ENCODE measurements at regions of chr20 and their contacts with region 1.

Region 1: GRCh38 chr20:56554869-56555268 is 21.8 kb downstream of the FAM209B start:
- DNase-seq: peak; percentile 88
- H3K4me3 ChIP-seq: no peak overlapping the region
- CTCF ChIP-seq: no peak

Region 2: GRCh38 chr20:56566271-56566981 is 11.6 kb after region 1 on chr20:
- CTCF ChIA-PET with region 1: interaction called, 32 read pairs
- POLR2A ChIA-PET with region 1: no interaction called
- DNase-seq: no peak
- H3K4me3 ChIP-seq: no peak overlapping the region
- CTCF ChIP-seq: no peak

Region 3: DNA sequence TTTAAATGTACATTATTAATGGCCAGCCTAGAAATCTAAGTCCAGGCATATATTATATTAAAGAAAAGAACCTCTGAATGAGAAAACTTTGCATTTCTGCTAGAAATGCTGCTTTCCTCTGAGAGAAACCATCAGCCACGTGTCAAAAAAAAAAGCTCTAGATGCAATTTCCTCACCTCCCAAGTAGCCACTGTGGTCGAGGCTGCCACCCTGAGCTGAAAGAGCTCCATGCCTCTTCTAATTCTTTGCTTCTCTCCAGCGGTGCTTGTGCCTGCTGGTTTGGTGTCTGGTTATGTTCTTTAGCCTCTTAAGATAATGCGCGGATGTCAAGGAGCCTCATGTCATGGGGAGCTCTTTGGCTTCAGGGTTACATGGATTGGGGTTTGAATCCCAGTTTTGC is 390.2 kb after region 1 on chr20:
- CTCF ChIA-PET with region 1: interaction called, 10 read pairs
- POLR2A ChIA-PET with region 1: no interaction called
- DNase-seq: no peak
- H3K4me3 ChIP-seq: no peak overlapping the region
- CTCF ChIP-seq: no peak

Region 4: GRCh38 chr20:56995576-56996075 is 440.8 kb after region 1 on chr20:
- CTCF ChIA-PET with region 1: interaction called, 33 read pairs
- POLR2A ChIA-PET with region 1: no interaction called
- DNase-seq: no peak
- H3K4me3 ChIP-seq: no peak overlapping the region
- CTCF ChIP-seq: peak; percentile 57

Region 5: GRCh38 chr20:57080788-57081187 is 525.9 kb after region 1 on chr20:
- CTCF ChIA-PET with region 1: interaction called, 19 read pairs
- POLR2A ChIA-PET with region 1: no interaction called
- DNase-seq: no peak
- H3K4me3 ChIP-seq: no peak overlapping the region
- CTCF ChIP-seq: peak; percentile 26

Measured in AG04449 (cell line).